Activated CD4-positive, alpha-beta T cell treated with anti-CD3 and anti-CD28 coated beads for 36 hours (primary cell): ENCODE measurements at regions of chr11 and their contacts with region 1.

Region 1: GRCh38 chr11:96254087-96254486 is 88.9 kb downstream of the MAML2 start:
- DNase-seq: peak; percentile 42
- ATAC-seq: peak; percentile 37
- H3K4me3 Mint-ChIP-seq: peak overlapping the region; percentile 53
- H3K27ac Mint-ChIP-seq: peak overlapping the region; percentile 88
- H3K4me1 Mint-ChIP-seq: peaks cover 89% of the 10 kb centered on the region
- H3K27me3 Mint-ChIP-seq: no peaks in the 10 kb centered on the region

Region 2: GRCh38 chr11:96207459-96208449 is 46.3 kb before region 1 on chr11:
- CTCF ChIA-PET with region 1: interaction called, 3 read pairs
- POLR2A ChIA-PET with region 1: interaction called, 4 read pairs
- intact Hi-C with region 1: loop called in 1 of 2 experiments (anchors 2 kb)
- DNase-seq: peak; percentile 51
- ATAC-seq: peak; percentile 16
- H3K4me3 Mint-ChIP-seq: peak overlapping the region; percentile 51
- H3K27ac Mint-ChIP-seq: peak overlapping the region; percentile 95
- H3K4me1 Mint-ChIP-seq: peaks cover 93% of the 10 kb centered on the region
- H3K27me3 Mint-ChIP-seq: no peaks in the 10 kb centered on the region

Region 3: GRCh38 chr11:96228473-96228891 is 25.6 kb before region 1 on chr11:
- CTCF ChIA-PET with region 1: no interaction called
- POLR2A ChIA-PET with region 1: interaction called, 7 read pairs
- intact Hi-C with region 1: loop called in 1 of 2 experiments (anchors 2 kb)
- DNase-seq: no peak
- ATAC-seq: no peak
- H3K4me3 Mint-ChIP-seq: no peak overlapping the region
- H3K27ac Mint-ChIP-seq: peak overlapping the region; percentile 88
- H3K4me1 Mint-ChIP-seq: peaks cover 88% of the 10 kb centered on the region
- H3K27me3 Mint-ChIP-seq: no peaks in the 10 kb centered on the region

Region 4: GRCh38 chr11:96267496-96268032 is 13.5 kb after region 1 on chr11:
- CTCF ChIA-PET with region 1: interaction called, 13 read pairs
- POLR2A ChIA-PET with region 1: no interaction called
- intact Hi-C with region 1: loop called (anchors 1 kb)
- DNase-seq: peak; percentile 69
- ATAC-seq: peak; percentile 94
- H3K4me3 Mint-ChIP-seq: peak overlapping the region; percentile 20
- H3K27ac Mint-ChIP-seq: peak overlapping the region; percentile 93
- H3K4me1 Mint-ChIP-seq: peaks cover 82% of the 10 kb centered on the region
- H3K27me3 Mint-ChIP-seq: no peaks in the 10 kb centered on the region

Region 5: DNA sequence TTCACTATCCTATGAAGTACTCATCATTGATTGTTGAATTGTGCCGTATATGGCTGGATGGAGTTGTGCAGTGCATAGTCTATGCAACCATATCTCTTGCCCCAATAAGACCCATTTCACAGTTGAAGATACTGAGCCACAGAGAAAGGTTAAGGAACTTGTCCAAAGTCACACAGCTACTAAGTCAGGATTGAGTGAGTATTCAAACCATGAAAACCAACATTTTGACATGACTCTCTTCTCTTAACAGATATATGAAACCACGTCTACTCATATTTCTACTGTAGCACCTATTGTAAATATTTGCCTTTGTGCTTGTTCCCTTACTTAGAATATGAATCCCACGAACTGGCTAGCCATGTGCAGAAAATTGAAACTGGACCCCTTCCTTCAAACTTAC is 30.8 kb after region 1 on chr11:
- CTCF ChIA-PET with region 1: no interaction called
- POLR2A ChIA-PET with region 1: interaction called, 4 read pairs
- intact Hi-C with region 1: loop called in 1 of 2 experiments (anchors 2 kb)
- DNase-seq: no peak
- ATAC-seq: peak; percentile 74
- H3K4me3 Mint-ChIP-seq: no peak overlapping the region
- H3K27ac Mint-ChIP-seq: peak overlapping the region; percentile 48
- H3K4me1 Mint-ChIP-seq: peaks cover 86% of the 10 kb centered on the region
- H3K27me3 Mint-ChIP-seq: no peaks in the 10 kb centered on the region